OCI-LY7 (cell line): ENCODE measurements at regions of chr5 and their contacts with region 1.

Region 1: DNA sequence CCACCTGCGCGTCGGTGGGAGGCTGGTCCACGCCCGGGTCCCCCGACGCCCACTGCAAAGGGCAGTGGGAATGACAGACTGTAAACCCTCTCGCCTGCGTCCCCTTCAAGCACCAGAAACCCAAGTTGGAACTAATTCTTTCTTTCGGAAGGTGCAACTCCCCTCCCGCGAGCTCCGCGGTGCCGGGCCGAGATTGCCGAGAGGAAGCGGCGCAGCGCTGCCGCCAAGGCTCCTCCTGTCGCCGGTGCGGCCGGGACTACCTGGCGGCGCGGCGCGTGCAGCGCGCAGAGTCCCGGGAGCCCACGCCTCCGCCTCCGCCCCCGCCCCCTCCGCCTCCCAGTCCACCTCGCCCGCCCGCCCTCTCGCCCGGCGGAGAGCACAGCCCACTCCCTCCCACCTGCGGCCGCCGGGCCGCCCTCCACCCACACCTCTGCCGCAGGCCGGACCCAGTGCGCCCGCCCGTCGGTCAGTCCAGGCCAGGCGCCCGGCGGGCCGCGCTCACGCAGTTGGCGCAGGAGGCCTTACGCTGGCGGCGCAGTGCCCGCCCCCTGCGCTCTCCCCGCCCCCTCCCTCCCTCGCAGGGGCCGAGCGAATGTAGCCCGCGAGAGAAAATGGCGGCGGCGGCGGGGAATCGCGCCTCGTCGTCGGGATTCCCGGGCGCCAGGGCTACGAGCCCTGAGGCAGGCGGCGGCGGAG is at the start of gene MAP3K1:
- DNase-seq: peak; percentile 88
- H3K4me3 ChIP-seq: peak within 1 kb of the TSS; percentile 95
- H3K27ac ChIP-seq: peak within 1 kb of the TSS; percentile 74
- H3K4me1 ChIP-seq: peaks cover 52% of the 10 kb centered on the region
- CTCF ChIP-seq: peak; percentile 64
- total RNA-seq, gene MAP3K1: 25.9 and 29.9 TPM in 2 replicates

Region 2: GRCh38 chr5:56415356-56415765 is 399.8 kb before region 1 on chr5:
- CTCF ChIA-PET with region 1: no interaction called
- POLR2A ChIA-PET with region 1: interaction called, 4 read pairs
- intact Hi-C with region 1: loop called (anchors 1 kb)
- DNase-seq: peak; percentile 93
- H3K4me3 ChIP-seq: peak overlapping the region; percentile 58
- H3K27ac ChIP-seq: peak overlapping the region; percentile 84
- H3K4me1 ChIP-seq: peaks cover 50% of the 10 kb centered on the region
- CTCF ChIP-seq: no peak

Region 3: DNA sequence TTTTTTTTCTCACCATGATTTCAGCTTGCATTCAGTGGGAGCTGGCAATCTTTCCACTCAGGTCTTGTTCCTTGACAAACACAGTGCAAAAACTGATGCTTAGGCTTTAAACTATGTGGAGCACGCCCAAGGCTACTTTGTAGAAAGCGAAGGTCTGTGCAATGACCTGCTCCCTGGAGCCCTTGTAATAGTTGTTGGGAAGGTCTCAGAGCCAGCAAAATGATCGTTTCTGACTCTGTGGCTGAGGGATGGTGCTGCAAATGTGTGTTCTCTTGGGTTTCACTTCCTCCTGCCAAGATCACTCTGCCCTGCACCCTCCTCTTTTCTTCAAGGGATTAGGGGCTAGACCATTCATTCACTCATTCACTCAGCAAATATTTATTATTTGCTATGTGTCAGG is 249.5 kb before region 1 on chr5:
- CTCF ChIA-PET with region 1: no interaction called
- POLR2A ChIA-PET with region 1: no interaction called
- intact Hi-C with region 1: loop called (anchors 5 kb)
- DNase-seq: peak; percentile 85
- H3K4me3 ChIP-seq: peak overlapping the region; percentile 7
- H3K27ac ChIP-seq: peak overlapping the region; percentile 14
- H3K4me1 ChIP-seq: peaks cover 28% of the 10 kb centered on the region
- CTCF ChIP-seq: no peak

Region 4: GRCh38 chr5:56670118-56670483 is 145.0 kb before region 1 on chr5:
- CTCF ChIA-PET with region 1: interaction called, 3 read pairs
- POLR2A ChIA-PET with region 1: interaction called, 13 read pairs
- intact Hi-C with region 1: loop called (anchors 1 kb)
- DNase-seq: peak; percentile 98
- H3K4me3 ChIP-seq: peak overlapping the region; percentile 57
- H3K27ac ChIP-seq: peak overlapping the region; percentile 97
- H3K4me1 ChIP-seq: peaks cover 65% of the 10 kb centered on the region
- CTCF ChIP-seq: no peak

Region 5: GRCh38 chr5:56941981-56942380 is 126.9 kb after region 1 on chr5:
- CTCF ChIA-PET with region 1: no interaction called
- POLR2A ChIA-PET with region 1: no interaction called
- intact Hi-C with region 1: no loop called
- DNase-seq: no peak
- H3K4me3 ChIP-seq: no peak overlapping the region
- H3K27ac ChIP-seq: no peak overlapping the region
- H3K4me1 ChIP-seq: no peaks in the 10 kb centered on the region
- CTCF ChIP-seq: no peak

Region 6: DNA sequence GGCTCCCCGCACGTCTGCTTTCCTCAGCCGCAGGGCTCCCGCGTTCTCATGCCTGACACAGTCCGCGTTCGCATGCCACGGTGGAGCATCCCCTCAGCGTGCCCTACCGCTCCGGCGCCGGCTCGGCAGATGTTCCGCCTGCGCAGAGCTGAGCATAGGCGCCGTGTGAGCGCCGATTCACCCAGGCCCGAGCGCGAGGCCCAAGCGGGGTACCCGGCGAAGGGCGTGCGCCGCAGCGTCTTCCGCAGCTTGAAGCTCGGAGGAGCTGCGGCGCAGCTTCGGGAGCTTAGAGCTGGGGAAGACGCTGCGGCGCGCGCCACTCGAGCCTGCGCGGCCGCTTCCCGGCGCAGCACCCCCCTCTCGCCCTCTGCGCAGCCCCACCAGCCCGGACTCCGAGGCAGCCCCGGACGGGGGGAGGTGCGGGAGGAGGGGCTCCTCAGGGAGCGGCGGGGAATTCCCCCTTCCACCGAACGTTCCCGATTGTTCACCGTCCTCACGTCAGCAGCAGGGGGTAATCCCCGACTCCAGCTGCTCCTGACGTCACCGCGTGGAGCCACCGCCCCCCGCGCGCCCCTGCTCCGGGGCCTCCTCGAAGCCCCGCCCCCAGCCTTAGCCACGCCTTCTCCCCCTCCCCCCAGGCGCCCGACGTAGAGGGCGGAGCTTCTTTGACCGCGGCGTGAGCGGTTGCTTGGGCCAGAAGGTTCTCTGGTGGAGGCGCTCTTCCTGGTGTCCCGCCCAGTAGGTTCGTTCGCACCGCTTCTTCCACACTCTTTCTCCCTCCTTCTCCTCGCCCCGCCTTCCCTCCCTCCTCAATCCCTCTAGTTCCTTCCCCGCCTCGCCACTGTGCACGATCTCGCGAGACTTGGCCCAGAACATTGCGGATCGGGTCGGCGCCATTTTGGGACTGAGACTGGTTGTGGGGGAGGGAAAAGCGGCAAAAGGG is 358.3 kb after region 1 on chr5 and contains the start of gene GPBP1:
- CTCF ChIA-PET with region 1: no interaction called
- POLR2A ChIA-PET with region 1: no interaction called
- intact Hi-C with region 1: loop called (anchors 2 kb)
- DNase-seq: peak; percentile 96
- H3K4me3 ChIP-seq: peak within 1 kb of the TSS; percentile 93
- H3K27ac ChIP-seq: peak within 1 kb of the TSS; percentile 93
- H3K4me1 ChIP-seq: peaks cover 11% of the 10 kb centered on the region
- CTCF ChIP-seq: peak; percentile 3; the same call in 1 of the 2 replicates
- total RNA-seq, gene GPBP1: 77.0 and 96.6 TPM in 2 replicates